ENCODE measurements at regions of chrX and their contacts with region 1.

Region 1: GRCh38 chrX:97995834-97996233 is 1112.1 kb downstream of the RPA4 start:
- DNase-seq: no peak
- H3K4me3 ChIP-seq: no peak overlapping the region
- H3K27ac ChIP-seq: no peak overlapping the region
- H3K4me1 ChIP-seq: no peaks in the 10 kb centered on the region
- H3K27me3 ChIP-seq: no peaks in the 10 kb centered on the region
- CTCF ChIP-seq: no peak
- EP300 ChIP-seq: no peak
- POLR2A ChIP-seq: no peak

Region 2: GRCh38 chrX:96846841-96847240 is 1149.0 kb before region 1 on chrX:
- in situ Hi-C with region 1: no loop called
- intact Hi-C with region 1: no loop called
- DNase-seq: no peak
- H3K4me3 ChIP-seq: no peak overlapping the region
- H3K27ac ChIP-seq: no peak overlapping the region
- H3K4me1 ChIP-seq: no peaks in the 10 kb centered on the region
- H3K27me3 ChIP-seq: no peaks in the 10 kb centered on the region
- CTCF ChIP-seq: no peak
- EP300 ChIP-seq: no peak
- POLR2A ChIP-seq: no peak

Region 3: DNA sequence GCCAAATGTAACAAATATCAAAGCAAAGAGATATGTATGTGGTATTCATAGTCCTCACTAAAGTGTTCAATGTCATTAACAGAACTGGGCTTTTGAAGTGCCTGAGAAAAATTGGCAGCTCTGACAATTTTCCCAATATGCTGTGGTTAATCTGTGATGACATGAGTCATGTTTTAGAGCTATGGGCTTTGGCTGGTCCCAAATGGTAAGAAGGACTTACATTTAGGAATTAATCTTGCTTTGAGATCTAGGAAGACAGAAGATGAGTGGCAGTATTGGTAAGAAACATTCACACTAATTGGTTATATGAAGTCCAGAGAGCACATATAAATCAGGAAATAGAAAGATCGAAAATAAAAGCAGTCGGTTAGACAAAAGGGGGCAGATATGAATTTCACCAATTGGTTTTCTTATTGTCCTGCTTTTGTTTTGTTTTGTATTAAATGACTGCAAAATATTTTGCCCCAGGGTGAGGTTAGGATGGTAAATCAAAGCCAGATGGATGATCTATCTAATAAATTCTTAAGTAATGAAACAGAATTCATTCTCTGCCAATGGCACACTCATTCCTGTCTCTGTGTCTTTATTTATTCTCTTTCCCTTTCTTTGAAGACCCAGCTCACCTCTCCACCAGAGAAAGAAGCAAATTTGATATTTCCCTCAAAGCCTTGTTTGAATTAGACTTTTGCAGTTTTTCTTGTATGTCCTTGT is 119.0 kb before region 1 on chrX:
- in situ Hi-C with region 1: no loop called
- intact Hi-C with region 1: no loop called
- DNase-seq: no peak
- H3K4me3 ChIP-seq: no peak overlapping the region
- H3K27ac ChIP-seq: no peak overlapping the region
- H3K4me1 ChIP-seq: no peaks in the 10 kb centered on the region
- H3K27me3 ChIP-seq: no peaks in the 10 kb centered on the region
- CTCF ChIP-seq: no peak
- EP300 ChIP-seq: no peak
- POLR2A ChIP-seq: no peak

Region 4: DNA sequence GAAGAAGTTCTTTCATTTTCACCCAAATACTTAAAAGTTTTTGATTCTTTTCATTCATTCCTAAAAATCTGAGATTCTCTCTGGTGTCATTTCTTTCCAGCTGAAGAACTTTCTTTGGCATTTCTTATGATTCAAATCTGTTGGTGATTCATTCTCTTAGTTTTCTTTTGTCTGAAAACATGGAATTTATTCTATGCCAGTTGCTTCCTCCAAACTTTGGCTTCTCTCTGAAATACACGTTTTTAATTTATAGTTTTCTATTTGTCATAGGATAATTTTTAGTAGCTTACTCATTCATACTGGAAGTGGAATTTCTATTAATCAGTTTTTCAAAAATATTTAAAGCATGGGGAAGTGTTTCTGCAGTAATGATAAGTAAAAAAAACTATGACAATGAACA is 100.1 kb before region 1 on chrX:
- in situ Hi-C with region 1: no loop called
- intact Hi-C with region 1: no loop called
- DNase-seq: no peak
- H3K4me3 ChIP-seq: no peak overlapping the region
- H3K27ac ChIP-seq: no peak overlapping the region
- H3K4me1 ChIP-seq: no peaks in the 10 kb centered on the region
- H3K27me3 ChIP-seq: no peaks in the 10 kb centered on the region
- CTCF ChIP-seq: no peak
- EP300 ChIP-seq: no peak
- POLR2A ChIP-seq: no peak

Region 5: GRCh38 chrX:97984641-97985040 is 11.2 kb before region 1 on chrX:
- in situ Hi-C with region 1: no loop called
- intact Hi-C with region 1: loop called (anchors 2 kb)
- DNase-seq: no peak
- H3K4me3 ChIP-seq: no peak overlapping the region
- H3K27ac ChIP-seq: no peak overlapping the region
- H3K4me1 ChIP-seq: no peaks in the 10 kb centered on the region
- H3K27me3 ChIP-seq: no peaks in the 10 kb centered on the region
- CTCF ChIP-seq: no peak
- EP300 ChIP-seq: no peak
- POLR2A ChIP-seq: no peak